ENCODE measurements at regions of chr16 and their contacts with region 1.

Region 1: GRCh38 chr16:73713778-73714495 is 582.7 kb upstream of the PSMD7 start:
- DNase-seq: peak; percentile 32
- H3K4me3 ChIP-seq: no peak overlapping the region
- H3K27ac ChIP-seq: no peak overlapping the region
- H3K4me1 ChIP-seq: no peaks in the 10 kb centered on the region
- H3K27me3 ChIP-seq: no peaks in the 10 kb centered on the region
- CTCF ChIP-seq: peak; percentile 42

Region 2: DNA sequence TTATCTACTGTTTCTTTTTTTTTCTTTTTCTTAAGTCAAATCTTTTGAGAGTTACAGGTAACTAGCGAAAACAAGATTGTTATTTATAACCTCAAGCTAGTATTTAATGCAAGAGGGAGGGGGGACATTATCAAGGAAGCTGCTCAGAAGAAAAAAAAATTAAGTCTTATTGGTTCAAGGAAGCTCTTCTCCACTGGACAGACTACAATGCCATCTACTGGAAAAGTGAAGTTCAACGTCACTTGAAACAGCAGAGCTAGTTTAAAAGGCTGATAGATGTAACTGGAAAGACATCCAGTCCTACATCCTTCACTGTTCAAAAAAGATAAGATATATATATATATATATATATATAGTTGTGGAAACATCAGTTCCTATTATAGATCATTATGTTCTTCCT is 164.7 kb after region 1 on chr16:
- intact Hi-C with region 1: loop called (anchors 5 kb)
- DNase-seq: no peak
- H3K4me3 ChIP-seq: no peak overlapping the region
- H3K27ac ChIP-seq: no peak overlapping the region
- H3K4me1 ChIP-seq: no peaks in the 10 kb centered on the region
- H3K27me3 ChIP-seq: no peaks in the 10 kb centered on the region
- CTCF ChIP-seq: peak; percentile 37